ENCODE measurements at regions of chr1 and their contacts with region 1.

Region 1: GRCh38 chr1:226649780-226650179 is 89.3 kb downstream of the ITPKB start:
- DNase-seq: peak; percentile 14 to 44
- ATAC-seq: no peak
- H3K4me3 ChIP-seq: no peak overlapping the region
- H3K27ac ChIP-seq: no peak overlapping the region
- H3K4me1 ChIP-seq: peaks cover 26% of the 10 kb centered on the region
- H3K27me3 ChIP-seq: no peaks in the 10 kb centered on the region
- CTCF ChIP-seq: no peak

Region 2: GRCh38 chr1:226603022-226603857 is 46.5 kb before region 1 on chr1:
- intact Hi-C with region 1: no loop called
- DNase-seq: peak; percentile 61 to 72
- ATAC-seq: peak; percentile 39 to 69 (median 40)
- H3K4me3 ChIP-seq: peak overlapping the region; percentile 7
- H3K27ac ChIP-seq: peak overlapping the region; percentile 62
- H3K4me1 ChIP-seq: no peaks in the 10 kb centered on the region
- H3K27me3 ChIP-seq: no peaks in the 10 kb centered on the region
- CTCF ChIP-seq: no peak

Region 3: DNA sequence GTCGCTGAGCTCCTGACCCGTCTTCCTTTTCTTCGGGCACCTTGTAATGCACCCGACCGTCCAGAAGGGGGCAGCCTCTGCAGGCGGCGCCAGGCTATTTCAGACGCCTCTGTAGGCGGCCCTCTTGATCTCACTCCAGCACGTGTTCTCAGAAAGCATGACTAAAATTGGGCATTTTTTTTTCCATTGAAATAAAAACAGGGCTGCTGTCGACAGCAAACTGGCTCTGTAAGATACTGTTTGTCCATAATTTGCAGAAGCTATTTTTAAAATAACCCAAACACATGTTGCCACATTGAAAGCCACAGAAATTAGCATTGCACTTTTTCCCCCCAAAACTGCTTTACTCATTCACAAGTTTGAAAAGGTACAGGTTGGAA is 23.2 kb before region 1 on chr1:
- intact Hi-C with region 1: no loop called
- DNase-seq: peak; percentile 73 to 88
- ATAC-seq: peak; percentile 85 to 94 (median 90)
- H3K4me3 ChIP-seq: no peak overlapping the region
- H3K27ac ChIP-seq: no peak overlapping the region
- H3K4me1 ChIP-seq: peaks cover 5% of the 10 kb centered on the region
- H3K27me3 ChIP-seq: no peaks in the 10 kb centered on the region
- CTCF ChIP-seq: peak; percentile 92

Region 4: GRCh38 chr1:226687426-226687825 is 37.6 kb after region 1 on chr1:
- intact Hi-C with region 1: loop called in 1 of 2 experiments (anchors 5 kb)
- DNase-seq: no peak
- ATAC-seq: peak; percentile 64 to 85 (median 83)
- H3K4me3 ChIP-seq: no peak overlapping the region
- H3K27ac ChIP-seq: peak overlapping the region; percentile 10
- H3K4me1 ChIP-seq: peaks cover 71% of the 10 kb centered on the region
- H3K27me3 ChIP-seq: no peaks in the 10 kb centered on the region
- CTCF ChIP-seq: peak; percentile 32

Region 5: GRCh38 chr1:226708342-226708780 is 58.6 kb after region 1 on chr1:
- intact Hi-C with region 1: loop called in 1 of 2 experiments (anchors 5 kb)
- DNase-seq: no peak
- ATAC-seq: peak; percentile 51 to 89 (median 86)
- H3K4me3 ChIP-seq: no peak overlapping the region
- H3K27ac ChIP-seq: peak overlapping the region; percentile 23
- H3K4me1 ChIP-seq: peaks cover 28% of the 10 kb centered on the region
- H3K27me3 ChIP-seq: no peaks in the 10 kb centered on the region
- CTCF ChIP-seq: no peak

Measured in psoas muscle (tissue), 8 donors.